ENCODE measurements at regions of chr2 and their contacts with region 1.

Region 1: DNA sequence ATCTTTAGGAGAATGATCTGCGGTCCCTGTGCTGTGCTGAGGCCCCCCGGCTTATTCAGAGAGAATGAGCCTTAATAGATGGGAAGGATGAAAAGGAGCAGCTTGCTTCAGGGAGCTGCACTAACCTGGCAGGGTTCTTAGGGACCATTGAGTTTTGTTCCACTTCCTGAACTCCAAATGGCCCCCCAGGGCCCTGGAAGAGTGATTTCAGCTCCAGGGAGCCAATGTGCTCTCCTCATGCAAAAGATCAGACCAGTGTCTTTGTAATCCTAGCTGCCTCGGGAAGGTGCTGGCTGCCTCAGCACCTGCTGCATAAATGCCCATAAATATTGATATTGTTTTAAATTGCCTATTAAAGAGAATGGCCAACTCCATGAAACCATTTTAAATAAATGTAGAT is 210.2 kb downstream of the NCK2 start:
- DNase-seq: no peak
- ATAC-seq: no peak
- H3K4me3 ChIP-seq: no peak overlapping the region
- H3K4me3 Mint-ChIP-seq: no peak overlapping the region
- H3K27ac ChIP-seq: no peak overlapping the region
- H3K27ac Mint-ChIP-seq: no peak overlapping the region
- H3K4me1 ChIP-seq: peaks cover 15 to 44% of the 10 kb centered on the region in 2 experiments
- H3K4me1 Mint-ChIP-seq: peaks cover 55 to 59% (median 59%) of the 10 kb centered on the region in 3 donors
- H3K27me3 ChIP-seq: peaks cover 0 to 3% of the 10 kb centered on the region in 2 experiments
- H3K27me3 Mint-ChIP-seq: no peaks in the 10 kb centered on the region

Region 2: DNA sequence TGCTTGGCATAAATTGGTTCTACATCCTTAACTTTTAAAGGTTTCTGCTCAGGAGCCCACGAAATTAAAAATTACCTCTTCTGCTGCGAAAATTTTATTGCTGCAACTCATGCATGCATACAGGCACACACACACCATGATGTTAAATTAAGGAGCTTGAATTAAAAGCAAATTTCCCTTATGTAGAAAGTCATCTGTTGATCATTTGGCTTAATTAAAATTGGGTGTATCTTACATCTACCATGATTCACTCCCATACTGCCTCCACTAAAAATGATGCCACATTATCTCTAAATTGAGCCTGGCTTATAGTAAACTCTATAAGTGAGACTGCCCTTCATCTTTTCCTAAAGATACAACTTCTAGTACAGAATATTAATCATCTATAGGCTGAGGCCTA is 64.8 kb before region 1 on chr2:
- CTCF ChIA-PET with region 1: no interaction called
- POLR2A ChIA-PET with region 1: interaction called in 1 of 2 experiments, 14 read pairs
- DNase-seq: no peak
- ATAC-seq: no peak
- H3K4me3 ChIP-seq: no peak overlapping the region
- H3K4me3 Mint-ChIP-seq: peak overlapping the region in 1 of 3 donors; percentile 4
- H3K27ac ChIP-seq: peak overlapping the region; percentile 13
- H3K27ac Mint-ChIP-seq: peak overlapping the region; percentile 53 to 71
- H3K4me1 ChIP-seq: peaks cover 2 to 37% of the 10 kb centered on the region in 2 experiments
- H3K4me1 Mint-ChIP-seq: peaks cover 61 to 63% (median 62%) of the 10 kb centered on the region in 3 donors
- H3K27me3 ChIP-seq: no peaks in the 10 kb centered on the region
- H3K27me3 Mint-ChIP-seq: no peaks in the 10 kb centered on the region

Region 3: DNA sequence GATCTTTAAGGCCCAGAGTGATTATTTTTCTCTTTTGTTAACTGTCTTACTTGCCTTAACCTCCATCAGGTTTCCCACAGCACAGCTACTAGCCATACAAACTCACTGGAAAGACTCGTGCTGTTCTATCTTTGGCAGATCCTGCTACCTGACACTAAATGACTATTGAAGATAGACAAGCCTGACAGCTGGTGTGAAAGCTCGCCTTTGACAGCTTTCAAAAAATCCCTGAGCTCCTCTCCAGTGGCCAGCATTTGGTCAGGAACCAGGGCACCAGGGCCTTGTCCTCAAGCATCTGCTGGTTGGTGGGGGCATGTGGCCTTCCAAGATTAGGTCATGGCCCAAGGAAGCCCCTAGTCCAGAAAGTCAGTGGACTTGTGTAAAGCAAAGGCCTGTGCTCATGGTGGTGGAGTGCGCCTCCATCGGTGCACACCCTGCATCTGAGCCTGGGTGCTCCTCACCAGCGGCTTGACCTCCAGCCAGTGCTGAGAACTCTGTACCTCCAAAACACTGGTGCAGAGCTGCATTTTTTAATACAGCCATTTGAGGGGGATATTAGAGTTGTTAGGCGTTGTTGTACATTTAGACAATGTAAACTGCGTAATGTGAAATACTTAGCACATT is 51.7 kb before region 1 on chr2:
- CTCF ChIA-PET with region 1: no interaction called
- POLR2A ChIA-PET with region 1: interaction called in 1 of 2 experiments, 10 read pairs
- DNase-seq: no peak
- ATAC-seq: no peak
- H3K4me3 ChIP-seq: no peak overlapping the region
- H3K4me3 Mint-ChIP-seq: no peak overlapping the region
- H3K27ac ChIP-seq: no peak overlapping the region
- H3K27ac Mint-ChIP-seq: peak overlapping the region; percentile 29 to 45
- H3K4me1 ChIP-seq: peaks cover 4 to 23% of the 10 kb centered on the region in 2 experiments
- H3K4me1 Mint-ChIP-seq: peaks cover 73 to 83% (median 75%) of the 10 kb centered on the region in 3 donors
- H3K27me3 ChIP-seq: no peaks in the 10 kb centered on the region
- H3K27me3 Mint-ChIP-seq: no peaks in the 10 kb centered on the region

Region 4: DNA sequence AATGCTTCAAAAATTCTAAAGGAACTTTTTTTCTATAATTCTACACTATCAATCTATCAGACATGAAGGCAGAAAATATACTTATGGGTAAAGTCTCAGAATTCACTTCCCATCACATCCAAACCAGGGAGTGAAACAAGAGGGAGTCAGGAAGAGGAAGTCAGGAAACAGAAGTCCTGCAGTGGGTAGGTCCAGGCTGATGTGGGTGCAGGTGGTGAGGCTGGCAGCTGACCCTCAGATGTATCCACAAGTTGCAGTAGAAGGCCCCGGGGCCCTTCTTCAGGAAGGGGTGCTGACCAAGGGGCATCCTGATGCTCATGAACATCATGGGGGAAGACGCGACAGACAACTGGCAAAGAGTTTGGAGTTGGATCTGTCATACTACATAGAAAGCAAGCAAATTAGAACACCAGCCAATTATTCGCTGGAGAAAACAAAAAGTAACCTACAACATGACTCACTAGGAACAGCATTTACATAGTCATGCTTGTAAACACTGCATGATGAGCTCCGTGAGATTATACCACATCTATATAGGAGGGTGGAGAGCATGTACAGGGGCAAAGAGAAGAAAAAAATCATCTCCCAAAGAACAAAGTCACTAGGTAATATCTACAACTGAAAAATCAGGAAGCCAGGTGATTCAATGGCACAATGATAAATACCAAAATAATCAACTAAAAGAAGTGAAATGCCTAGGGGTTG is 235.0 kb after region 1 on chr2:
- CTCF ChIA-PET with region 1: no interaction called
- POLR2A ChIA-PET with region 1: no interaction called
- DNase-seq: no peak
- ATAC-seq: no peak
- H3K4me3 ChIP-seq: no peak overlapping the region
- H3K4me3 Mint-ChIP-seq: peak overlapping the region in 1 of 3 donors; percentile 56
- H3K27ac ChIP-seq: no peak overlapping the region
- H3K27ac Mint-ChIP-seq: peak overlapping the region; percentile 19 to 74
- H3K4me1 ChIP-seq: peaks cover 27 to 41% of the 10 kb centered on the region in 2 experiments
- H3K4me1 Mint-ChIP-seq: peaks cover 73 to 86% (median 82%) of the 10 kb centered on the region in 3 donors
- H3K27me3 ChIP-seq: no peaks in the 10 kb centered on the region
- H3K27me3 Mint-ChIP-seq: no peaks in the 10 kb centered on the region

Region 5: DNA sequence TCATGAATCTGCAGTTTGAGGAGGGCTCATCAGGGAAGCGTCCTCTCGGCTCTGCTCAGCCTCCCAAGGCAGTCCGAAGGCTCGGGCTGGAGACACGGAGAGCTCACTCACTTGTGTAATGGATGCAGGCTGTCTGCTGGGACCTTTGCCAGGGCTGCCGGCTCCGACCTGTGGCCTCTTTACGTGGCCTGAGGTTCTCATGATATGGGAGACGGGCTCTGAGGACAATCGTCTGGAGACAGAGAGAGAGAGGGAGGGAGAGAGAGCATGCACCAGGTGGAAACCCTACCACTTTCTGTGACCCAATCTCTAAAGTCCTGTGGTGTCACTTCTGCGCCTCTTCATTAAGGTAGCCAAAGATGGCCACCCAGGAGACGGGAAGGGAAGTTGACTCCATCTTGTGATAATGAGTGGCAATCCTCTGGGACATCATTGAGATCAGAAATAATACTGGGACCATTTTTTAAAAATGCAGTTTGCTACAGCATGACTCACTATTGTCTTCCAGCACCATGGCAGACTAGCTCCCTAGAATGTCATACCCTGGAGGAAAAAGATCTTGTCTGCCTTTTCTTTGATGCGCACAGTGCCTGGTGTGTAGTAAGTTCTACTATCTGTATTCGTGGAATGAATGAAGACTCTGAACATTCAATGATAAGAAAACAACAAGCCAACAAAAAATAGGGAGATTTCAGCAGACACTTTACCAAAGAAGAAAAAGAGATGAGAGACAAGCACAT is 592.4 kb after region 1 on chr2:
- CTCF ChIA-PET with region 1: no interaction called
- POLR2A ChIA-PET with region 1: interaction called in 1 of 2 experiments, 11 read pairs
- DNase-seq: no peak
- ATAC-seq: no peak
- H3K4me3 ChIP-seq: no peak overlapping the region
- H3K4me3 Mint-ChIP-seq: no peak overlapping the region
- H3K27ac ChIP-seq: no peak overlapping the region
- H3K27ac Mint-ChIP-seq: no peak overlapping the region
- H3K4me1 ChIP-seq: peaks cover 0 to 6% of the 10 kb centered on the region in 2 experiments
- H3K4me1 Mint-ChIP-seq: peaks cover 0 to 3% (median 2%) of the 10 kb centered on the region in 3 donors
- H3K27me3 ChIP-seq: peaks cover 0 to 29% of the 10 kb centered on the region in 2 experiments
- H3K27me3 Mint-ChIP-seq: peaks cover 21 to 23% of the 10 kb centered on the region in 2 donors

Measured in T-cell (primary cell).